Right ventricle myocardium superior (tissue), 1 donor: ENCODE measurements at regions of chr21 and their contacts with region 1.

Region 1: GRCh38 chr21:36917471-36918158 is 48.9 kb downstream of the HLCS start:
- DNase-seq: no peak
- ATAC-seq: peak; percentile 78

Region 2: GRCh38 chr21:36661511-36662309 is 255.9 kb before region 1 on chr21:
- intact Hi-C with region 1: loop called (anchors 10 kb)
- DNase-seq: peak; percentile 46
- ATAC-seq: peak; percentile 60

Region 3: DNA sequence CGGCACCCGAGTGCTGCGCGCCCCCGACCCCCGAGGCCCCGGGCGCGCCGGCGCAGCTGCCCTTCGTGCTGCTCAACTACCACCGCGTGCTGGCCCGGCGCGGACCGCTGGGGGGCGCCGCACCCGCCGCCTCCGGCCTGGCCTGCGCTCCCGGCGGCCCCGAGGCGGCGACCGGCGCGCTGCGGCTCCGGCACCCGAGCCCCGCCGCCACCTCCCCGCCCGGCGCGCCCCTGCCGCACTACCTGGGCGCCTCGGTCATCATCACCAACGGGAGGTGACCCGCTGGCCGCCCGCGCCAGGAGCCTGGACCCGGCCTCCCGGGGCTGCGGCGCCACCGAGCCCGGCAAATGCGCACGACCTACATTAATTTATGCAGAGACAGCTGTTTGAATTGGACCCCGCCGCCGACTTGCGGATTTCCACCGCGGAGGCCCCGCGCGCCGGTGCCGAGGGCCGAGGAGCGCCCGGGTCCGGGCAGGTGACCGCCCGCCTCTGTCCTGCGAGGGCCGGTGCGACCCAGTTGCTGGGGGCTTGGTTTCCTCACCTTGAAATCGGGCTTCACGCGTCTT is 169.7 kb before region 1 on chr21:
- intact Hi-C with region 1: loop called (anchors 10 kb)
- DNase-seq: peak; percentile 61
- ATAC-seq: peak; percentile 77